ENCODE measurements at regions of chr6 and their contacts with region 1.

Region 1: DNA sequence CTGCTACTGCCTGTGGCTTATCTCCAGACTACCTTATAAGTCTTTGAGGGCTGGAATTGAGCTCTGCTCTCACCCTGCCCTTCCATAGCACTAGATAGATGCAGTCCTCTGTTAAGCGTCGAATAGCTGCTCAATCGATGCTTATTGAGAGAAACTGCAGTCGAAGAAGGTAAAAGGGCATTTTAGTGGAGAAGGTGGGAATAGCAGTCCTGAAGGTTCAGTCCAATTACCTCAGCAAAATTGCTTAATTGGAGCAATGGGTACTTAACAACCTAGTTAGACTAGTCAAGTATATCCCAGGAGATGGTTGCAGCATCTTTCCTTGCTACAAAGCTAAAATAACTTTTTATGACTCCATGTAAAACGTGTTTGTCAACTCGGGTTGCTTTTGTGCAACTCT is 66.8 kb upstream of the NT5E start:
- DNase-seq: no peak
- H3K4me3 ChIP-seq: peak overlapping the region in 1 of 3 experiments; percentile 5
- H3K27ac ChIP-seq: peak overlapping the region; percentile 84
- H3K4me1 ChIP-seq: peaks cover 18% of the 10 kb centered on the region
- H3K27me3 ChIP-seq: no peaks in the 10 kb centered on the region
- CTCF ChIP-seq: no peak
- POLR2A ChIP-seq: no peak

Region 2: GRCh38 chr6:84976526-84977420 is 406.3 kb before region 1 on chr6:
- CTCF ChIA-PET with region 1: no interaction called
- POLR2A ChIA-PET with region 1: no interaction called
- dilution Hi-C with region 1: no loop called
- intact Hi-C with region 1: no loop called
- DNase-seq: peak; percentile 71
- H3K4me3 ChIP-seq: no peak overlapping the region
- H3K27ac ChIP-seq: no peak overlapping the region
- H3K4me1 ChIP-seq: peaks cover 32% of the 10 kb centered on the region
- H3K27me3 ChIP-seq: no peaks in the 10 kb centered on the region
- CTCF ChIP-seq: no peak
- POLR2A ChIP-seq: no peak

Region 3: DNA sequence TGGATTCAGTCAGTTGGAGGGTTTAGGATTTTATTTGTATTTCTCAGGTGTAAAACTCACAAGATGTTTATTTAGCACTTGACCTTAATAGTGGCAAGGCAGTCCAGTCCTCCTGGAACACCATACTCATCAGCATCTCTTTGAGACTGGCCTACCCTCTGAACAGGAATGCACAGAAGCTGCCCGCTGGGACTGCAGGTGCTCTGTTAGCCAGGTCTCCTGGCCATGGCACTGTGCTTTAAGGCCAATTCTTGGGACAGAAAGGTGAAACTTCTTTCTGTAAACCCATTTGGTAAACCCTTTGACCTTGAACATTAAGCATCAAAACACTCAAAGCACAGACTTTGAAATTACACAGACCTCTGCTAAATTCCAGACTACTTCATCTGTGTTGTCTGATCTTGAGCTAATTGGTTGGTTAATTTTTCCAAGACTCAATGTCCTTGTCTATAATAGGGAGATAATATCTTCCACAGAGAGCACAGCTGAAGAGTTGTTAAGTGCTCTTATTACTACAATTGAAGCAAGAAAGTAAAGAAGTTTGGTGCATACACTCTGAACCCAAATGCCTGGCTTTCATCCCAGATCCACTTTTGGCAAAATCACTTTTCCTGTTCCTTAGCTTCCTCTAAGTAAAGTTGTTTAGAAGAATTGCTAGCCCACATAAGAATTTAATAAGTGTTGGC is 12.0 kb after region 1 on chr6:
- CTCF ChIA-PET with region 1: interaction called, 11 read pairs
- POLR2A ChIA-PET with region 1: no interaction called
- dilution Hi-C with region 1: no loop called
- intact Hi-C with region 1: loop called (anchors 1 kb)
- DNase-seq: peak; percentile 78
- H3K4me3 ChIP-seq: no peak overlapping the region
- H3K27ac ChIP-seq: no peak overlapping the region
- H3K4me1 ChIP-seq: peaks cover 6% of the 10 kb centered on the region
- H3K27me3 ChIP-seq: no peaks in the 10 kb centered on the region
- CTCF ChIP-seq: no peak
- POLR2A ChIP-seq: no peak